Adrenal gland (tissue), 19 donors: ENCODE measurements at regions of chr10 and their contacts with region 1.

Region 1: GRCh38 chr10:20582041-20582440 is 315.1 kb downstream of the NEBL start:
- DNase-seq: no peak
- H3K4me3 ChIP-seq: no peak overlapping the region
- H3K27ac ChIP-seq: no peak overlapping the region
- H3K4me1 ChIP-seq: no peaks in the 10 kb centered on the region
- H3K27me3 ChIP-seq: no peaks in the 10 kb centered on the region
- CTCF ChIP-seq: no peak
- POLR2A ChIP-seq: no peak

Region 2: DNA sequence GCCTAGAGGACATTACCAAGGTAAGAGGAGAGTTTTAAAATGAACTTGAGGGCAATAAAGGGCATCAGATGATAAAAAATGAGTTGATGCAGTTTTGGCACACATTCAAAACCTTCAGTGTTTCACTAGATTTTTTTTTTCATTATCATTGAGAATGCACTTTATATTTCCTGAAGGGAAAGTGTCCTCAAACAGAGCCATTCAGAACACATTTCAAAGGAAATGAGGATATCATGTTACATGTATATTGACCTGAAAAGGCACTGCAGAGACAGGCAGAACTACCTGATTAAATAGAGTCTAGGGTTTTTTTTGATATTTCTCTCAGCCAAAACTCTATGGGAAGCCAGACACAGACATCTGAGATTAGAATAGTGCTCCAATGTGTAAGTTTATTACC is 138.9 kb before region 1 on chr10:
- intact Hi-C with region 1: no loop called
- DNase-seq: no peak
- H3K4me3 ChIP-seq: no peak overlapping the region
- H3K27ac ChIP-seq: no peak overlapping the region
- H3K4me1 ChIP-seq: no peaks in the 10 kb centered on the region
- H3K27me3 ChIP-seq: no peaks in the 10 kb centered on the region
- CTCF ChIP-seq: no peak
- POLR2A ChIP-seq: no peak

Region 3: GRCh38 chr10:20535897-20536881 is 45.9 kb before region 1 on chr10:
- intact Hi-C with region 1: loop called in 1 of 2 experiments (anchors 2 kb)
- DNase-seq: no peak
- H3K4me3 ChIP-seq: no peak overlapping the region
- H3K27ac ChIP-seq: no peak overlapping the region
- H3K4me1 ChIP-seq: no peaks in the 10 kb centered on the region
- H3K27me3 ChIP-seq: no peaks in the 10 kb centered on the region
- CTCF ChIP-seq: no peak
- POLR2A ChIP-seq: no peak